Activated T-helper 2 cell treated with anti-CD3 and anti-CD28 coated beads, Interferon-gamma antibody, Interleukin-2, Interleukin-4, amounts not matched to agents 10 μg/mL and 5 μg/mL and 100 μg/mL, durations not matched to agents 14 hours and 24 hours and 36 hours (primary cell): ENCODE measurements at regions of chr6 and their contacts with region 1.

Region 1: DNA sequence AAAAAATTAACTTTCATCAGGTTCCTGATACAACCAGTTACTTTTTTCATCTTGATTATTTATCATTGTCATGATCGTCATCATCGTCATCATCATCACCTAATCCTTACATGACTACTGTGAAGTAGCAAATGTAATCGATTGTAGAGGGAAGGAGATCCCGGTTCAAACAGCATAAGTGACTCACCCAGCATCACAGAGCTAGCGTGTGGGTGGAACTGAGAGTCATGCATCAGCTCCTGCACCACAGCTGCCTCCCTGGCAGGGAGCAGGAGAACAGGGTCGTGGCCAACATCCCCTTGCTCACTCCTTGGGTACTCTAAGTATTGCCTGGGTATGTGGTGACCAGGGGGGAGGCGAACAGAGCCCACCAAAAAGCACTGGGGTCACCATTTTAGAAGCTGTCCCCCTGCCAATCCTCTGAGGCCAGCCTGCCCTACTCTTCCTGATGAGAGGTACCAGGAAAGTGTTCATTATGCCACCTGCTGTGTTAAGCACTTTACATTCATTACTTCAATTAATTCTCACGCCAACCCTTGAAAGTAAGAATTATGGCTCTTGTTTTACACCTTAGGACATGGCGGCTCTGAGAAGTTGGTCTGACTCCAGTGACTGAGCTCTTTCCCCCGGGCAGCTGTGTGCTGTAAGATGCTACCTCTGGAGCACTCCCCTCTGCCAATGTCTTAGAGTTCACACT is 425.2 kb downstream of the CD83 start:
- DNase-seq: peak; percentile 23
- H3K4me3 Mint-ChIP-seq: no peak overlapping the region
- H3K27ac Mint-ChIP-seq: peak overlapping the region; percentile 76
- H3K4me1 Mint-ChIP-seq: peaks cover 31% of the 10 kb centered on the region
- H3K27me3 Mint-ChIP-seq: no peaks in the 10 kb centered on the region

Region 2: DNA sequence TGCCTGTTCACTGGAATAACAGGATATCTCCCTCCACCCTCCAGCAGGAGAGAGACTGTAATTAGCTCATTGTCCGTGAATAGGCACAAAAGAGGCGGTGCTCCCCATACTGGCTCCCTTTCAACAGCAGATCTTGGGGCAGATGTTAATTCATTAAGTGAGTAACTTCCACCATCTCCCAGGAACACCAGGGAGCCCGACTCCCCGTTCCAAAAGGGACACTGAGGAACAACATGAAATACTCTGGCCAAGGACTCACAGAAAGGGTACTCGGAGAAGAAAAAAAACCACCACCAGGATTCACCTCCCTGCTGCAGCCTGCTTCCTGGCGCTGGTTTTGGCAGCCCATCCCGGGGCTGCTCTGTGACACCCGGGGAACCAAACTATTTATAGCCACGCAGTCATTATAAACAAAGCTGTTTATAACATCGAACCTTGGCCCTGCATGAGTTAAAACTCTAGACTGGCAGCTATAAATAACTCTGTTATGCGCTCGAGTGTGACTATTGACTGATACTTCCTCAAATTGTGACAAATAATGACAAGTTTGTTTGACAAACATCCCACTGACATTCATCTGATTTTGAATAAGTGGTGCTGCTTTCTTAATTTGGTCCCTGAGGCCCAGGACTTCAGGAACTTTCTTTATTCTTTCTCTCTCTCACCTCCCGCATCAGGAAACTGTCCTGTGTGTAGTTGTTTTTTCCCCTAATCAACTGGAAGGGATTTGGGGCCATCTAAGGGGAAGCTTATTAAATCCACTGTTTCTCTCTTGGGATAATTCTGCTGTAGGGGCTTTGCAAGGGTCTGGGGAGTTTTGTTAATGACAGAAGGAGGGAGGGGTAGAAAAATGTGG is 96.3 kb after region 1 on chr6:
- intact Hi-C with region 1: loop called (anchors 5 kb)
- DNase-seq: no peak
- H3K4me3 Mint-ChIP-seq: no peak overlapping the region
- H3K27ac Mint-ChIP-seq: no peak overlapping the region
- H3K4me1 Mint-ChIP-seq: peaks cover 74% of the 10 kb centered on the region
- H3K27me3 Mint-ChIP-seq: peaks cover 3% of the 10 kb centered on the region

Region 3: DNA sequence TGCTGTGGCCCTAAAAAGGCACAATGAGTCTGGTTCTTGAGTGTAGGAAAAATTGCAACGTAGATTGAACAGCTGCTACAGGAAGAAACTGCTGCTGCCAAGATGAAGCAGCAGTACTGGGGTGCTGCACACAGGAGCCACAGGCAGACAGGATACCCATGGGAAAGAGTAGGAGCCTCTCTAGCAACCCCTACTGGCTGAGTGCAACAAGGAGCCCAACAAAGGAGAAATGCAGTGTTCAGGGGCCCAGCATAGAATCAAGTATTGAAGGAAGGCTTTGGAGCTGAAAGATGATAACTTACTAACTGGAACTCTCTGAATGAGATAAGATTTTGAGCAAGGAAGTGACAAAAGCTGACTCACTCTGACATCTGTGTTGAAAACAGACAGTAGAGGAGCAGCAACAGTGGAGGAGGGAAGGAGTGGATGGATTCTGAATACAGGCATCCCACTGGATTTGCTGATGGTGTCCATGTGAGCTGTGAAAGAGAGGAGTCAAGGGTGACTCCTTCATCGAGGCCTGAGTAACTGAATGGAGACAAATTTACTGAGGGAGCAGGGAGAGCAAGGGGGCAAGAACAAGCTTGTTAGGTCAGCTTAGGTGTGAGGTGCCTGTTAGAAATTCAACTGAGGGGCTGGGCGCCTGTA is 168.4 kb after region 1 on chr6:
- intact Hi-C with region 1: loop called (anchors 1 kb)
- DNase-seq: peak; percentile 63
- H3K4me3 Mint-ChIP-seq: peak overlapping the region; percentile 75
- H3K27ac Mint-ChIP-seq: peak overlapping the region; percentile 99
- H3K4me1 Mint-ChIP-seq: peaks cover 60% of the 10 kb centered on the region
- H3K27me3 Mint-ChIP-seq: no peaks in the 10 kb centered on the region